GM12878 (cell line): ENCODE measurements at regions of chr11 and their contacts with region 1.

Region 1: DNA sequence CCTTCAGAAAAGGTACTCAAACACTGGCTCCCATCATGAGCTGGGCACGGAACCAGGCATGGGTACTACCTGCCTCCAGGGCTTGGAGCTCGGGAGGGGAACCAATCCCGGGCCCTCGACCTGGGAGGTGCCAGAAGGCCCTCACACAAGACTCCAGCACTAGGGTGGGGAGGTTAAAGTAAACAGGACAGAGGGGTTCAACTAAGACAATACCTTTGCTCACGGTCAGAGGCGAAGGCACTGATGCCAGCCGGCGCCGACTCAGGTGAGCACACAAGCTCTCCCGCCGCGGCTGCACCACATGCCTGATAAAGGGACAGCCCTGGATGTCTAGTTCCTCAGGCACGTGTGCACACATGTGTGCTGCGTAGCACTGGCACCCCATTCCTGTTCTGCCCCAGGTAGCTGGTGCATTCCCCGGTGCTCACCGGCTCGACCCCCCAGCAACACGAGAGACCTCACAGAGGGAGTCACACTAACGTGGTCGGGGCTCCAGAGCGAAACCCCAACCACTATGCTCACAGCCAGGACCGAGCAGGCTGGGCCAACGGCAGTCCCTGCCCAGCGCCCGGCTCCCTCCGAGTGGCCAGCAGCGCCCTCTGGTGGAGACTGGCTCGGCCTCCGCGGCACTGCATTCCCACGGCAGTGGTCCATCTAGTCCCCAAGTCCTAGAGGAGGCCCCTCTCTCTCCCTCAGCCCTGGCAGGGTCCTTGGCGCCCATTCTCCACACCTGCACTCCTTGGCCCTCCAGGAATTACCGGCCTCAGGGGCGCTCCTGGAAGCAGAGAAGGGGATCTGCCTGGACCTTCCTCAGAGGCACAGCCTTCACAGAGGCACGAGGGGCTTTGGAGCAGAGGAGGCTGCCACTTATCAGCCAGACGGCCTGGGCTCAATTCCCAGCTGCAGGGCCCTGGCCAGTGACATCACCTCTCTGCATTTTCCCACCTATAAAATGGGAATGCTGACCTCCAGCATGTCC is 28.8 kb upstream of the MOB2 start:
- DNase-seq: no peak
- ATAC-seq: peak; percentile 95
- H3K4me3 ChIP-seq: no peak overlapping the region
- H3K27ac ChIP-seq: no peak overlapping the region
- H3K4me1 ChIP-seq: peaks cover under 1% of the 10 kb centered on the region; the same call in 1 of the 2 replicates
- H3K27me3 ChIP-seq: no peaks in the 10 kb centered on the region
- CTCF ChIP-seq: peak; percentile 73 to 86 (median 84)
- EP300 ChIP-seq: no peak
- POLR2A ChIP-seq: no peak
- RAD21 ChIP-seq: peak; percentile 70

Region 2: GRCh38 chr11:1202776-1203504 is 312.4 kb before region 1 on chr11:
- CTCF ChIA-PET with region 1: interaction called, 5 read pairs
- POLR2A ChIA-PET with region 1: no interaction called
- RAD21 ChIA-PET with region 1: interaction called, 3 read pairs
- SMC1A ChIA-PET with region 1: no interaction called
- in situ Hi-C with region 1: no loop called
- intact Hi-C with region 1: loop called (anchors 1 kb)
- DNase-seq: no peak
- ATAC-seq: peak; percentile 97
- H3K4me3 ChIP-seq: no peak overlapping the region
- H3K27ac ChIP-seq: no peak overlapping the region
- H3K4me1 ChIP-seq: no peaks in the 10 kb centered on the region
- H3K27me3 ChIP-seq: no peaks in the 10 kb centered on the region
- CTCF ChIP-seq: peak; percentile 76 to 98 (median 90)
- EP300 ChIP-seq: no peak
- POLR2A ChIP-seq: no peak
- RAD21 ChIP-seq: peak; percentile 78

Region 3: DNA sequence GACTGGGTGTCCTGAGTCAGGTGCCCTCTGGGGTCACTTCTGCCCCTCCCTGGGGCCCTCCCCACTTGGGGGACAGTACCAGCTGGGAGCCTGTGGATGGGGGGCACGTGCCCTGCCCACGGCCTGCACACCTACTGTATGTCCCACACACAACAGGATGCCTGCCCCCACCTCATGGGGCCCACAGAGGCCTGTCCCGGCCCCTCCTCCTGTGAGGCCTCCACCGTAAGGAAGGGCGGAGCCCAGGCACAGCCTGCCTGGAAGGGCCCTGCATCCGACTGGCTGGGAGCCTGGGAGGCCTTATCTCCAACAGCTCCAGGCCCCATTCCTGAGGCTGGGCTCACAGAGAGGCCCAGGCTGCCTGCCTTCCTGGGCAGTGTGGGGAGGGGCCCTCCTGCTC is 77.9 kb before region 1 on chr11:
- CTCF ChIA-PET with region 1: no interaction called
- POLR2A ChIA-PET with region 1: no interaction called
- RAD21 ChIA-PET with region 1: no interaction called
- SMC1A ChIA-PET with region 1: no interaction called
- in situ Hi-C with region 1: no loop called
- intact Hi-C with region 1: no loop called
- DNase-seq: no peak
- ATAC-seq: peak; percentile 24; the same call in 1 of the 3 replicates
- H3K4me3 ChIP-seq: no peak overlapping the region
- H3K27ac ChIP-seq: no peak overlapping the region
- H3K4me1 ChIP-seq: no peaks in the 10 kb centered on the region
- H3K27me3 ChIP-seq: no peaks in the 10 kb centered on the region
- CTCF ChIP-seq: no peak
- EP300 ChIP-seq: no peak
- POLR2A ChIP-seq: no peak
- RAD21 ChIP-seq: no peak

Region 4: GRCh38 chr11:1453611-1454034 is 61.7 kb before region 1 on chr11:
- CTCF ChIA-PET with region 1: interaction called, 3 read pairs
- POLR2A ChIA-PET with region 1: no interaction called
- RAD21 ChIA-PET with region 1: no interaction called
- SMC1A ChIA-PET with region 1: no interaction called
- in situ Hi-C with region 1: no loop called
- intact Hi-C with region 1: loop called (anchors 2 kb)
- DNase-seq: peak; percentile 2
- ATAC-seq: peak; percentile 88
- H3K4me3 ChIP-seq: no peak overlapping the region
- H3K27ac ChIP-seq: no peak overlapping the region
- H3K4me1 ChIP-seq: no peaks in the 10 kb centered on the region
- H3K27me3 ChIP-seq: no peaks in the 10 kb centered on the region
- CTCF ChIP-seq: peak; percentile 56 to 82 (median 78)
- EP300 ChIP-seq: no peak
- POLR2A ChIP-seq: no peak
- RAD21 ChIP-seq: peak; percentile 55